ENCODE measurements at regions of chr4 and their contacts with region 1.

Region 1: DNA sequence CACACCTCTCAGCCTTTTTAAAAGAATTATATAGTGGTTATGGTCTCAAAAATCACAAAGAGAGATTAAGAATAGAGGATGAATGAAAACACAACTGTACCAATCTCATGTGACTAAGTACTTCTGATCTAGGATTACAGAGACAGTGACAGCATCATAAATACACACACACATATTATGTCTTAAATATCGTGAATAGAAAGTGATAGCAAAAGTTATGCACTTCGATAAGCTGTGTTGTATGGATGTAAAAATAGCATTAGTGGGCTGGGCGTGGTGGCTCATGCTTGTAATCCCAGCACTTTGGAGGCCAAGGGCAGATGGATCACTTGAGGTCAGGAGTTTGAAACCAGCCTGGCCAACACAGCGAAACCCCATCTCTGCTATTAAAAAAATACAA is 25.0 kb downstream of the GYPA start:
- DNase-seq: no peak
- ATAC-seq: no peak
- H3K4me3 ChIP-seq: no peak overlapping the region
- H3K27ac ChIP-seq: no peak overlapping the region
- H3K4me1 ChIP-seq: no peaks in the 10 kb centered on the region
- H3K27me3 ChIP-seq: peaks cover 40% of the 10 kb centered on the region
- CTCF ChIP-seq: no peak

Region 2: GRCh38 chr4:143558823-143559756 is 556.4 kb before region 1 on chr4:
- CTCF ChIA-PET with region 1: no interaction called
- POLR2A ChIA-PET with region 1: no interaction called
- intact Hi-C with region 1: loop called (anchors 10 kb)
- DNase-seq: peak; percentile 86
- ATAC-seq: peak; percentile 93
- H3K4me3 ChIP-seq: peak overlapping the region; percentile 68
- H3K27ac ChIP-seq: no peak overlapping the region
- H3K4me1 ChIP-seq: no peaks in the 10 kb centered on the region; the same call in 1 of the 2 replicates
- H3K27me3 ChIP-seq: no peaks in the 10 kb centered on the region
- CTCF ChIP-seq: peak; percentile 97

Region 3: GRCh38 chr4:144267084-144267483 is 151.6 kb after region 1 on chr4:
- CTCF ChIA-PET with region 1: no interaction called
- POLR2A ChIA-PET with region 1: no interaction called
- intact Hi-C with region 1: no loop called
- DNase-seq: no peak
- ATAC-seq: no peak
- H3K4me3 ChIP-seq: no peak overlapping the region
- H3K27ac ChIP-seq: no peak overlapping the region
- H3K4me1 ChIP-seq: no peaks in the 10 kb centered on the region
- H3K27me3 ChIP-seq: no peaks in the 10 kb centered on the region
- CTCF ChIP-seq: no peak

Measured in PC-3 (cell line).